ENCODE measurements at regions of chr9 and their contacts with region 1.

Region 1: GRCh38 chr9:35859310-35859989 is 10.8 kb downstream of the OR13J1 start:
- DNase-seq: peak; percentile 80 to 89 (median 85)
- H3K4me3 ChIP-seq: no peak overlapping the region
- H3K27ac ChIP-seq: no peak overlapping the region
- H3K4me1 ChIP-seq: no peaks in the 10 kb centered on the region
- H3K27me3 ChIP-seq: peaks cover 0 to 94% (median 39%) of the 10 kb centered on the region in 5 experiments

Region 2: GRCh38 chr9:35628389-35628991 is 231.0 kb before region 1 on chr9:
- CTCF ChIA-PET with region 1: no interaction called
- POLR2A ChIA-PET with region 1: no interaction called
- DNase-seq: no peak
- H3K4me3 ChIP-seq: no peak overlapping the region
- H3K27ac ChIP-seq: no peak overlapping the region
- H3K4me1 ChIP-seq: no peaks in the 10 kb centered on the region
- H3K27me3 ChIP-seq: no peaks in the 10 kb centered on the region

Region 3: DNA sequence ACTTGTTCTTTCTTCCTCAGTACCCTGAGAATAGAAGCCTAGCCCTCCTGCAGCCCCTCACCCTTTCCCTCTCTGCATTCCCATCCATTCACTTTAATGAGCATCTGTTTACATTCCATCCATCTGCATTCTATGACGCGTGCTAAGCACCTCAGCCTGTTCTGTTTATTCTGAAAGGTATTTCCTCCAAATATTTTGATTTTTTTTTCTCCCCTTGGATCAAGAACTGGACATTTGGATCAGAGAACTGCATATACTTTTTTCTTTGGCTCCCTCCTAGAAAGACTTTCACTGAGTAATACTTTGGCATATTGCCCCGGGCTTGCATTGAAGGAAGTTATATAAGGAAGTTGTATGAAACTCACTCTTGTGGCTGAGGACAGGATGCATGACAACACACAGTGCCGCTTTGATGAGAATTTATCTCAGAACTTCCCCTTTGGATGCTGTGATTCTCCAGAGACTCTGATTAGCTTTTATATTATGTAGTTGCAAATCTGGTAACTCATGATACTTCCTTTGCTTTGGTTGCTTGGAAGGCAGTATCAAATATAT is 14.7 kb before region 1 on chr9:
- CTCF ChIA-PET with region 1: interaction called, 13 read pairs
- POLR2A ChIA-PET with region 1: interaction called, 3 read pairs
- DNase-seq: peak; percentile 92 to 98 (median 97)
- H3K4me3 ChIP-seq: no peak overlapping the region
- H3K27ac ChIP-seq: no peak overlapping the region
- H3K4me1 ChIP-seq: peaks cover 7 to 27% (median 7%) of the 10 kb centered on the region in 4 experiments
- H3K27me3 ChIP-seq: peaks cover 12 to 80% (median 38%) of the 10 kb centered on the region in 5 experiments

Region 4: DNA sequence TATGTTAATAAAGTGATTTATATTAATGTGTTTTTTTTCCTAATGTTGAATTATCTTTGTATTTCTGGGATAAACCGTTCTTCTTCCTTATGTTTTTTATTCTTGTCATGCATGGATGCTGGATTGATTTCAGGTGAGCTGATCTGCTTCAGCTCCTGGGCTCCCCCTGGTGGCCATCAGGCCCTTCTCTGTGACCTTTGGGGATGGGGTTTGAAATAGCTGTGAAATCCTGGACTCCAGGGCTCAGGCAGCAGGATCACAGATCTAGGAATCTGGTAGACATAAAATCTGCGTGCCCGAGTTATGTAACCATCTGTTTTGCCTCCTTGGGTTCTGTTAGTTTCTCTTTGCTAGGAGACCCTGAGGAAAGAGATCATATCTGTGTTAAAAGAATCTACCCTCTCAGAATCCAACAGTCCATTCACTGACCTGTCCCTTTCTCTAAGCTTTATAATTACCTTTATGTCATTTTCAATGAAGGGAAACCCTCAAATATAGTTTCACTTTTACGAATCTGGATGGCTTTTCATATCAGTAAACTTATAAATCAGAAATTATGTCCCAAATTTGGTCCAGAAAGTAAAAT is 22.9 kb after region 1 on chr9:
- CTCF ChIA-PET with region 1: interaction called, 15 read pairs
- POLR2A ChIA-PET with region 1: no interaction called
- DNase-seq: peak; percentile 55 to 67 (median 58)
- H3K4me3 ChIP-seq: no peak overlapping the region
- H3K27ac ChIP-seq: no peak overlapping the region
- H3K4me1 ChIP-seq: no peaks in the 10 kb centered on the region
- H3K27me3 ChIP-seq: peaks cover 0 to 3% (median 0%) of the 10 kb centered on the region in 5 experiments